ENCODE measurements at regions of chrX and their contacts with region 1.

Region 1: GRCh38 chrX:8820910-8821527 is 19.8 kb upstream of the FAM9A start:
- DNase-seq: peak; percentile 23 to 49
- H3K4me3 ChIP-seq: no peak overlapping the region
- H3K27ac ChIP-seq: no peak overlapping the region
- H3K4me1 ChIP-seq: peaks cover 0 to 5% (median 1%) of the 10 kb centered on the region in 4 experiments; a peak in 2 of 7 replicates
- H3K27me3 ChIP-seq: no peaks in the 10 kb centered on the region
- CTCF ChIP-seq: peak in 2 of 3 experiments; percentile 56 to 62; a peak in 3 of 4 replicates
- EP300 ChIP-seq: no peak
- POLR2A ChIP-seq: no peak
- RAD21 ChIP-seq: peak; percentile 77 to 81

Region 2: GRCh38 chrX:8714164-8714563 is 106.9 kb before region 1 on chrX:
- CTCF ChIA-PET with region 1: no interaction called
- POLR2A ChIA-PET with region 1: no interaction called
- DNase-seq: no peak
- H3K4me3 ChIP-seq: no peak overlapping the region
- H3K27ac ChIP-seq: no peak overlapping the region
- H3K4me1 ChIP-seq: peaks cover 0 to 9% (median 5%) of the 10 kb centered on the region in 4 experiments; a peak in 4 of 7 replicates
- H3K27me3 ChIP-seq: no peaks in the 10 kb centered on the region
- CTCF ChIP-seq: no peak
- EP300 ChIP-seq: no peak
- POLR2A ChIP-seq: no peak
- RAD21 ChIP-seq: no peak

Region 3: DNA sequence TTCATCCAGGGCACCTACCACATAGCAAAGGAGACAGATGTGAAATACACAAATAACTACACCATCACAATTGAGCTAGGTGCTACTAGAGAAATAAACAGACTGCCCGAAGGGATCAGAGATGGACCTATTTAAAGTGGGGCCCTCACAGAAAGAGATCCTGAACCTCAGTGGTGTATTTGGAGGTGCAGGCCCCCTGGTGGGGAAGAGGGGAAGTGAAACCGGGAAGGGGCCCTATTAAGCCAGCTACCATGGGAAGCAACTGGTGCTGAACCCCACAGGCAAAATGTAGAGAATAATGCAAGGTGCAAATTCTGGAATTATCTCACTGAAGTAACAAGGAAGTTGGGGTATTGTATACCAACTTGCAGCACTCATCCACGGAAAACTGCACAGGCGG is 58.7 kb after region 1 on chrX:
- CTCF ChIA-PET with region 1: interaction called, 11 read pairs
- POLR2A ChIA-PET with region 1: no interaction called
- DNase-seq: peak in 1 of 2 experiments; percentile 79
- H3K4me3 ChIP-seq: no peak overlapping the region
- H3K27ac ChIP-seq: no peak overlapping the region
- H3K4me1 ChIP-seq: no peaks in the 10 kb centered on the region
- H3K27me3 ChIP-seq: no peaks in the 10 kb centered on the region
- CTCF ChIP-seq: peak; percentile 45 to 67 (median 57)
- EP300 ChIP-seq: no peak
- POLR2A ChIP-seq: no peak
- RAD21 ChIP-seq: peak; percentile 43 to 63; a peak in 3 of 4 replicates